Mammary epithelial cell (primary cell): ENCODE measurements at regions of chr16 and their contacts with region 1.

Region 1: GRCh38 chr16:7703672-7704071 is 371.0 kb downstream of the RBFOX1 start:
- DNase-seq: no peak
- H3K4me3 ChIP-seq: no peak overlapping the region
- H3K27ac ChIP-seq: no peak overlapping the region
- H3K4me1 ChIP-seq: no peaks in the 10 kb centered on the region
- H3K27me3 ChIP-seq: no peaks in the 10 kb centered on the region
- CTCF ChIP-seq: no peak

Region 2: GRCh38 chr16:7653746-7654461 is 49.8 kb before region 1 on chr16:
- CTCF ChIA-PET with region 1: no interaction called
- dilution Hi-C with region 1: no loop called
- in situ Hi-C with region 1: loop called in 1 of 2 experiments (anchors 10 kb)
- intact Hi-C with region 1: no loop called
- DNase-seq: no peak
- H3K4me3 ChIP-seq: no peak overlapping the region
- H3K27ac ChIP-seq: no peak overlapping the region
- H3K4me1 ChIP-seq: no peaks in the 10 kb centered on the region
- H3K27me3 ChIP-seq: no peaks in the 10 kb centered on the region
- CTCF ChIP-seq: no peak